ENCODE measurements at regions of chr16 and their contacts with region 1.

Region 1: DNA sequence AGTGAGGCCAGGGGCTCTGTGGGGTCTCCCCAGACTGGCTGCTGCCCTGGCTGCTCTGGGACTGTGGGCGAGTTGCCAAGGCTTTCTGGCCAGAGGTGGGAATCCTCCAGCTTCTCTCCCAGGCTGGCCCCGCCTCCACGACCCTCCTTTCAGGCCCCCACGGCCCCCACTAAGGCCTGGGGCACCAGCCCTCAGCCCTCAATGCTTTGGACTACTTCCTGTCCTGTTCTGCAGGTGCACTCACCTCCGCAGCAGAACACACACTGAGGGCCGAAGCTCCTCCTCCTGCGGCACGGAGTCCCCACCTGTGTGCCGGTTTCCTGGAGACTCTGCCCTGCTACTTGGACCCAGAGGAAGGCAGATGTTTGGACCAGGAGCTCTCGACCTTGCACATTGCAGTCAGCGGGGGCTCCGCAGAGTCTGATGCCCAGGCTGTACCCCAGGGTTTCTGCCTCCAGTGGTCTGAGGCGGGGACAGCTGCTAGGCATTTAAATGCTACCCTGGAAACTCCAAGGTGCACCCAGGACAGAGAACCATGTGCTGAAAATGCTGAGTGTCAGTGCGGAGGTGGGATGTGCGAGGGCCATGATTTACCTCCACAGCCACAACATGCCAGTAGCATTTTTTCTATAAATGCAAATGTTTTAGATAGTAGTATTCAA is 223.8 kb downstream of the IRF8 start:
- DNase-seq: peak in 1 of 2 experiments; percentile 54
- H3K4me3 ChIP-seq: no peak overlapping the region
- H3K27ac ChIP-seq: no peak overlapping the region
- H3K4me1 ChIP-seq: peaks cover 0 to 8% (median 1%) of the 10 kb centered on the region in 4 experiments; a peak in 2 of 7 replicates
- H3K27me3 ChIP-seq: 0 out of 7 replicates have a peak, but pooled peaks cover 0 to 2% (median 0%) of the 10 kb centered on the region in 4 experiments
- CTCF ChIP-seq: peak; percentile 6 to 57 (median 40)
- EP300 ChIP-seq: no peak
- POLR2A ChIP-seq: no peak
- RAD21 ChIP-seq: no peak

Region 2: DNA sequence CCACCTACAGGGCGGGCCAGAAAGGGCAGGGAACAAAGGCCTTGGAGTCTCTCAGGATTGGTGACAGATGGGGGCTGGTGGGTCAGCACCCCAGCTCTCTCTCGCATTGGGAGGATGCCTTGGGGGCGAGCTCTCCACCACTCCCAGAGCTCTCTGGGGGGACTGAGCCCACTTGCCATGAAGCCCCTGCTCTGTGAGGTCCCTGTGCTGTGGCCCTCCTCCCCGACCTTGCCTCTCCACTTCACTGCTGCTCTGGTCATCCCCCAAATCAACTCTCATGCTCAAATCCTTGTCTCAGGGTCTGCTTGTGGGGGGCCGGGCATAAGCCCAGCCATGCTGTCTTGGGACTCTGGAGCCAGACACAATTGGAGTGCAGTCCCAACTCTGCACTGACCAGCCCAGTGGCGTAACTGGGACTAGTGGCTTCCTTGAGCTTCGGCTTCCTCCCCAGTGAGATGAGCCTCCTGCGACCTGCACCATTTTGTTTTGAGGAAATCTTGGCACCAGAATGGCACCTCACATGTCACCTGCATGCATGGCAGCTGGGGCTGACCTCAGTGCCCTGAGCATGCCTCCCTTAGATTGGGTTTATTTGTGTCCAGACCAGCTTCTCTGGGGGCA is 39.3 kb before region 1 on chr16:
- CTCF ChIA-PET with region 1: no interaction called
- POLR2A ChIA-PET with region 1: no interaction called
- DNase-seq: no peak
- H3K4me3 ChIP-seq: no peak overlapping the region
- H3K27ac ChIP-seq: no peak overlapping the region
- H3K4me1 ChIP-seq: peaks cover 0 to 4% (median 0%) of the 10 kb centered on the region in 4 experiments; a peak in 3 of 7 replicates
- H3K27me3 ChIP-seq: no peaks in the 10 kb centered on the region
- CTCF ChIP-seq: no peak
- EP300 ChIP-seq: no peak
- POLR2A ChIP-seq: no peak
- RAD21 ChIP-seq: no peak

Region 3: GRCh38 chr16:86134802-86135461 is 12.1 kb after region 1 on chr16:
- CTCF ChIA-PET with region 1: interaction called, 15 read pairs
- POLR2A ChIA-PET with region 1: interaction called, 3 read pairs
- DNase-seq: no peak
- H3K4me3 ChIP-seq: no peak overlapping the region
- H3K27ac ChIP-seq: no peak overlapping the region
- H3K4me1 ChIP-seq: no peaks in the 10 kb centered on the region
- H3K27me3 ChIP-seq: no peaks in the 10 kb centered on the region; a peak in 1 of 7 replicates
- CTCF ChIP-seq: no peak
- EP300 ChIP-seq: no peak
- POLR2A ChIP-seq: no peak
- RAD21 ChIP-seq: no peak

Measured in H1 (cell line).